ENCODE measurements at regions of chr6 and their contacts with region 1.

Region 1: GRCh38 chr6:122730775-122731386 is 48.6 kb upstream of the FABP7 start:
- DNase-seq: no peak
- ATAC-seq: peak; percentile 58
- H3K4me3 ChIP-seq: no peak overlapping the region
- H3K4me1 ChIP-seq: no peaks in the 10 kb centered on the region
- CTCF ChIP-seq: peak; percentile 34

Region 2: DNA sequence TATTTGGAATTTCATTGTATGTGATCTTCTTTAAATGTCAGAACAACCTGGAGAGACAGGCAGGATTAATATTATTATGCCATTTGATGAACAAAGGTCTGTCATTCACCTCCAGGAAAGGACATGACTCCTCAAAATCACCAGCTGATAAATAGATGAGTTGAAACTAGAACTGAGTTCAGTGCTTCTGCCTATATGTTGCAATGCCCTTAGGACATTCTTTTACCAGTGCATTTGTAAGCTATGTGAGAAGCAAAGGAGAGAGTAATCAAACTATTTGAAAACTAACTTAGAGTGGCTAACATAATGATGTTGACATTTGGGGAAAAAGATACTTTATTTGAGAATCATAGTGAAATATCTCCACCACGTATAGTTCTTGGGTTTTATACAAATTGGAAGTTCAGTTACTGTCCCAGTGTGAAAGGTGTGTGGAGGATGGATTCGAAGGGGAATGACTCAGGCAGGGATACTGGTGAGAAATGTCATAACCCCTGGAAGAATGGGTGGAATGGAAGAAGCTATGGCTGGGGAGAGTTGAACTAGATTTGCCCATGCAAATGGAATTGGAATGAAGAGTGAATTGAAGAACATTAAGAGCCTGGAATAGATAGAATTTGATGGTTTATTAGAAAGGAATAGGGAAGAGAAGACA is 99.2 kb before region 1 on chr6:
- intact Hi-C with region 1: no loop called
- DNase-seq: no peak
- ATAC-seq: no peak
- H3K4me3 ChIP-seq: no peak overlapping the region
- H3K4me1 ChIP-seq: no peaks in the 10 kb centered on the region
- CTCF ChIP-seq: no peak

Region 3: GRCh38 chr6:122673343-122673961 is 57.4 kb before region 1 on chr6:
- intact Hi-C with region 1: no loop called
- DNase-seq: no peak
- ATAC-seq: peak; percentile 76
- H3K4me3 ChIP-seq: no peak overlapping the region
- H3K4me1 ChIP-seq: peaks cover 21% of the 10 kb centered on the region
- CTCF ChIP-seq: no peak

Region 4: DNA sequence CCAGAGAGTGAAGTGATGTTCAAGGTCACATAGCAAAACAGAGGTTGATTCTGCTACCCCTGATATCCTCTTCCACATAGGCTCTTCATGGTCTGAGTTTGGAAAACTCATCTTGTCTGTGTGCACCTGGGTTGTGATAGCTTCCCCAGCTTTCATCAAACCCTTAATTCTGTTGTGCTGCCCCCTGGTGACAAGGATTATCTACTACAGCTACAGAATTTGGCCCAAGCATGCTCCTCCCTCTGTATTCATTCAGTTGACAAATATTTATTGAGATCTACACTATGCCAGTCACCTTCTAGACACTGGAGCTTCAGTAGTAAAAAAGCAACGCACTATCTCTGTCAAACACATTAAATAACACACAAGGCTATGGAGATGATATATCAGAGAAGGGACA is 108.6 kb after region 1 on chr6:
- intact Hi-C with region 1: loop called (anchors 5 to 10 kb)
- DNase-seq: peak in 1 of 3 donors; percentile 83
- ATAC-seq: peak; percentile 91
- H3K4me3 ChIP-seq: no peak overlapping the region
- H3K4me1 ChIP-seq: no peaks in the 10 kb centered on the region
- CTCF ChIP-seq: peak; percentile 25

Region 5: GRCh38 chr6:122853259-122853995 is 122.5 kb after region 1 on chr6:
- intact Hi-C with region 1: no loop called
- DNase-seq: no peak
- ATAC-seq: peak; percentile 76
- H3K4me3 ChIP-seq: no peak overlapping the region
- H3K4me1 ChIP-seq: no peaks in the 10 kb centered on the region
- CTCF ChIP-seq: no peak

Measured in mucosa of descending colon (tissue), 3 donors.